Vagina (tissue), 2 donors: ENCODE measurements at regions of chr3 and their contacts with region 1.

Region 1: DNA sequence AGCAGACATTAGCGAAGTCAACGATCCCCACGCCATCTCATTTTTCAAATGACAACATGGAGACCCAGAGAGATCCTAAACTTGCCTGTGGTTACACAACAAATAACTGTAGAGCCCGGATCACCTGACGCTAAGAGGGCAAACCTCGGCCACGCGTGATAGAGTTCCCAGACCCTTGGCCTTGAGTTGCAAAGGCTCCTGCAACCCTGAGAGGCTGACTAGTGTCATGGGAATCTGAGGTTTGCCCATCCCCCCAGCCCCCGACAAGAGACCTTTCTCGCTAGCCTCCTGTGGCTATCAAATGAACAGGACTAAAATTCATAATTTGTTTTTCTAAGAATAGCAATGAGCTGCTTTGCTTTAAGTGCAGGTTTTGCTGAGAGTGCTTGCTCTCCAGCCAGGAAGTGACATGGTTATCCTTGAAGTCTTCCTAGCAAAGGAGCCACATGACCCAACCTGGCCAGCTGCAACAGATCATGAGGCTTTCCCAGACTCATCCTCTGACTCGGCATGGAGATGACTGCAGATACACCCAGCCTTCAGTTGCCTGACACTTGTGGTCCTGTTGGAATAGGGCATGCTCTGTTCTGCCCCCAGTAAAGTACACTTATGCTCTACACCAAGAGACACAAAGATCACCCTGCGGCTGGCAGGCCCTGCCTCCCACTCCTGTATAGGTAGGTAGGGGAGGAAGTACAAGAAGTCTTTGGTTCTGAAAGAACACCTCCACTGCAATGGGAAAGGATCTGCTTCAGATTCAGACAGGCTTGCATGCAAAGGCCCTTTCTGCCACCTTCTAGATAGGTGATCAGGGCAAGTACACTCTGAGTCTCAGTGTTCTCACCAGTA is 36.0 kb downstream of the MCF2L2 start:
- DNase-seq: no peak
- H3K4me3 ChIP-seq: no peak overlapping the region
- H3K27ac ChIP-seq: no peak overlapping the region
- H3K4me1 ChIP-seq: no peaks in the 10 kb centered on the region
- H3K27me3 ChIP-seq: no peaks in the 10 kb centered on the region
- CTCF ChIP-seq: no peak
- POLR2A ChIP-seq: no peak

Region 2: DNA sequence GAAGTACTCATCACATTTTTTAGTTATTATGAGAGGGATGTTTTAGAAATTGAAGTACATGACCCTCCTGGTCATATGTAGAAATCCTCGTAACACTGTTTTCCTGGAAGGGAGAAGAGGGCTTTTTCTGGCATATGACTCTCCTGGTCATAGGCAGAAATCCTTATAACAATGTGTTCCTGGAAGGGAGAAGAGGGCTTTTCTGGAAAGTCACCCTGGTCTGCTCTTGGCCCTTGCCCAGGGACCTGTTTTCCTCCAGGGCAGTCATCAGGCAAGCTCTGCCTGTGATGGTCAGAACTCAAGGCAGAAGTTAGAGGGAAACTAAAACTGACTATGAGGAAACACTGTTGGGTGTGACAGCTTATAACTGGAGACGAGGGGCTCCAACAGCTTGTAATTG is 257.6 kb before region 1 on chr3:
- intact Hi-C with region 1: loop called (anchors 1 kb)
- DNase-seq: no peak
- H3K4me3 ChIP-seq: no peak overlapping the region
- H3K27ac ChIP-seq: no peak overlapping the region
- H3K4me1 ChIP-seq: no peaks in the 10 kb centered on the region
- H3K27me3 ChIP-seq: no peaks in the 10 kb centered on the region
- CTCF ChIP-seq: no peak
- POLR2A ChIP-seq: no peak